CD8-positive, alpha-beta T cell (primary cell): ENCODE measurements at regions of chr2 and their contacts with region 1.

Region 1: DNA sequence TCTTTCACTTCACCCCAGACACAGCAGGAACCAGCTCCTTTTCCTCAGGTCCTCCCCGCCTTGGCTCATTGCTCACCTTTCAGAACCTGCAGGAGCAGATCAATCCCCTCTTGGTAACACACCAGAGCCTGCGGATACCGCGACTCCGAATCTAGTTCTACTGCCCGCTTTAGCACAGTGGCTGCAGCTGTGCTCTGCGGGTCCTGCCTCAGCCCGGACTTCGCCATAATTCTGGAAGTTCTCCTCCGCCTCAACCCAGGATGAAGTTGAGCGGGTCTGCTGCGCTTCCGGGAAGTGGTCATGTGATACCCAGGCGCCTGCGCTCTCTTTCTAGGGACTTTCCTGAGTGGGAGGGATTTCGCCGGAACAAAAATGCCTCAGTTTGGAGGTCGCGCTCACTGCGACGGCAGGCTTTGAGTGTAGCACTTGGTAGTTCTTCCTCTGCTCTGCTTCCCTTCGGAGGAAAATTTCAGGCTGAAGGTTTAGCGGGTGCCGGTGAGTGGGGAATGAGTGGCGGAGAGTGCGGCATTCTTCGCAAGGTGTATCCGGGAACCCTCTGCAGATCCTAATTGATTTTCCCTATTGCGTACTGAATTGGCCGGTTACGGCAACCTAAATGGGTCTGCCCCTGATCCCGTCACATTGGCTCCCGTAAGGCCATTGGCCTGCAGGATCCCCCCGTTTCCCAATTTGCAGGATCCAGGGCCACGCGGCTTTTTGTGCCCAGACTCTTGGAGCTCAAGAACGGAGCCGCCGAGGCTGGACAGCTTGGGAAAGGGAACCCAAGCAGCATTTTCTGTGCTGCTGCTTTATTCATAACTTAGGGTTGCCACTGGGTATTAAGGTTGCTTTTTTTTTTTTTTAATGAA is at the starts of genes MITD1 and MRPL30:
- DNase-seq: peak; percentile 83 to 97 (median 91)
- ATAC-seq: peak; percentile 94
- H3K4me3 ChIP-seq: peak within 1 kb of the TSS; percentile 84 to 90
- H3K4me3 Mint-ChIP-seq: peak within 1 kb of the TSS; percentile 96
- H3K27ac ChIP-seq: peak within 1 kb of the TSS; percentile 85 to 88
- H3K27ac Mint-ChIP-seq: peak within 1 kb of the TSS; percentile 97
- H3K4me1 ChIP-seq: peaks cover 36% of the 10 kb centered on the region
- H3K4me1 Mint-ChIP-seq: peaks cover 69% of the 10 kb centered on the region
- H3K27me3 ChIP-seq: no peaks in the 10 kb centered on the region
- H3K27me3 Mint-ChIP-seq: no peaks in the 10 kb centered on the region
- CTCF ChIP-seq: no peak
- total RNA-seq, gene MITD1: 12.6 to 15.6 TPM
- total RNA-seq, gene MRPL30: 9.4 to 11.4 TPM

Region 2: GRCh38 chr2:97645695-97646629 is 1535.0 kb before region 1 on chr2 and contains the start of gene COX5B:
- CTCF ChIA-PET with region 1: no interaction called
- POLR2A ChIA-PET with region 1: interaction called, 3 read pairs
- intact Hi-C with region 1: loop called in 1 of 2 experiments (anchors 5 kb)
- DNase-seq: peak; percentile 97 to 99 (median 99)
- ATAC-seq: peak; percentile 97
- H3K4me3 ChIP-seq: peak within 1 kb of the TSS; percentile 94 to 97
- H3K4me3 Mint-ChIP-seq: peak within 1 kb of the TSS; percentile 91
- H3K27ac ChIP-seq: peak within 1 kb of the TSS; percentile 83 to 90
- H3K27ac Mint-ChIP-seq: peak within 1 kb of the TSS; percentile 95
- H3K4me1 ChIP-seq: peaks cover 20% of the 10 kb centered on the region
- H3K4me1 Mint-ChIP-seq: peaks cover 20% of the 10 kb centered on the region
- H3K27me3 ChIP-seq: no peaks in the 10 kb centered on the region
- H3K27me3 Mint-ChIP-seq: no peaks in the 10 kb centered on the region
- CTCF ChIP-seq: no peak
- total RNA-seq, gene COX5B: 115 to 117 TPM

Region 3: GRCh38 chr2:98634401-98635092 is 546.4 kb before region 1 on chr2:
- CTCF ChIA-PET with region 1: no interaction called
- POLR2A ChIA-PET with region 1: no interaction called
- intact Hi-C with region 1: loop called in 1 of 2 experiments (anchors 1 kb)
- DNase-seq: peak in 6 of 9 experiments; percentile 26 to 84 (median 64)
- ATAC-seq: peak; percentile 52
- H3K4me3 ChIP-seq: no peak overlapping the region
- H3K4me3 Mint-ChIP-seq: peak overlapping the region; percentile 63
- H3K27ac ChIP-seq: peak overlapping the region; percentile 12 to 87
- H3K27ac Mint-ChIP-seq: peak overlapping the region; percentile 96
- H3K4me1 ChIP-seq: peaks cover 49% of the 10 kb centered on the region
- H3K4me1 Mint-ChIP-seq: peaks cover 48% of the 10 kb centered on the region
- H3K27me3 ChIP-seq: no peaks in the 10 kb centered on the region
- H3K27me3 Mint-ChIP-seq: no peaks in the 10 kb centered on the region
- CTCF ChIP-seq: peak; percentile 54

Region 4: GRCh38 chr2:98771721-98772524 is 409.1 kb before region 1 on chr2:
- CTCF ChIA-PET with region 1: no interaction called
- POLR2A ChIA-PET with region 1: no interaction called
- intact Hi-C with region 1: loop called in 1 of 2 experiments (anchors 2 kb)
- DNase-seq: peak; percentile 36 to 93 (median 68)
- ATAC-seq: peak; percentile 68
- H3K4me3 ChIP-seq: peak overlapping the region; percentile 39 to 50
- H3K4me3 Mint-ChIP-seq: peak overlapping the region; percentile 87
- H3K27ac ChIP-seq: peak overlapping the region; percentile 79 to 89
- H3K27ac Mint-ChIP-seq: peak overlapping the region; percentile 98
- H3K4me1 ChIP-seq: peaks cover 67% of the 10 kb centered on the region
- H3K4me1 Mint-ChIP-seq: peaks cover 77% of the 10 kb centered on the region
- H3K27me3 ChIP-seq: no peaks in the 10 kb centered on the region
- H3K27me3 Mint-ChIP-seq: no peaks in the 10 kb centered on the region
- CTCF ChIP-seq: no peak

Region 5: GRCh38 chr2:99141110-99142108 is 39.6 kb before region 1 on chr2 and contains the start of gene C2orf15:
- CTCF ChIA-PET with region 1: interaction called, 3 read pairs
- POLR2A ChIA-PET with region 1: interaction called, 3 read pairs
- intact Hi-C with region 1: loop called (anchors 1 kb)
- DNase-seq: peak; percentile 91 to 98 (median 97)
- ATAC-seq: peak; percentile 88
- H3K4me3 ChIP-seq: peak within 1 kb of the TSS; percentile 86 to 97
- H3K4me3 Mint-ChIP-seq: peak within 1 kb of the TSS; percentile 88
- H3K27ac ChIP-seq: peak within 1 kb of the TSS; percentile 90 to 91
- H3K27ac Mint-ChIP-seq: peak within 1 kb of the TSS; percentile 96
- H3K4me1 ChIP-seq: peaks cover 14% of the 10 kb centered on the region
- H3K4me1 Mint-ChIP-seq: peaks cover 25% of the 10 kb centered on the region
- H3K27me3 ChIP-seq: no peaks in the 10 kb centered on the region
- H3K27me3 Mint-ChIP-seq: no peaks in the 10 kb centered on the region
- CTCF ChIP-seq: no peak
- total RNA-seq, gene C2orf15: 1.3 to 1.8 TPM

Region 6: GRCh38 chr2:99489761-99490622 is 309.0 kb after region 1 on chr2 and contains the start of gene REV1:
- CTCF ChIA-PET with region 1: no interaction called
- POLR2A ChIA-PET with region 1: no interaction called
- intact Hi-C with region 1: loop called (anchors 1 kb)
- DNase-seq: peak; percentile 85 to 97 (median 94)
- ATAC-seq: peak; percentile 88
- H3K4me3 ChIP-seq: peak within 1 kb of the TSS; percentile 87 to 89
- H3K4me3 Mint-ChIP-seq: peak within 1 kb of the TSS; percentile 97
- H3K27ac ChIP-seq: peak within 1 kb of the TSS; percentile 76 to 86
- H3K27ac Mint-ChIP-seq: peak within 1 kb of the TSS; percentile 98
- H3K4me1 ChIP-seq: peaks cover 24% of the 10 kb centered on the region
- H3K4me1 Mint-ChIP-seq: peaks cover 43% of the 10 kb centered on the region
- H3K27me3 ChIP-seq: no peaks in the 10 kb centered on the region
- H3K27me3 Mint-ChIP-seq: no peaks in the 10 kb centered on the region
- CTCF ChIP-seq: peak; percentile 78
- total RNA-seq, gene REV1: 39.3 to 42.3 TPM